ENCODE measurements at regions of chr11 and their contacts with region 1.

Region 1: DNA sequence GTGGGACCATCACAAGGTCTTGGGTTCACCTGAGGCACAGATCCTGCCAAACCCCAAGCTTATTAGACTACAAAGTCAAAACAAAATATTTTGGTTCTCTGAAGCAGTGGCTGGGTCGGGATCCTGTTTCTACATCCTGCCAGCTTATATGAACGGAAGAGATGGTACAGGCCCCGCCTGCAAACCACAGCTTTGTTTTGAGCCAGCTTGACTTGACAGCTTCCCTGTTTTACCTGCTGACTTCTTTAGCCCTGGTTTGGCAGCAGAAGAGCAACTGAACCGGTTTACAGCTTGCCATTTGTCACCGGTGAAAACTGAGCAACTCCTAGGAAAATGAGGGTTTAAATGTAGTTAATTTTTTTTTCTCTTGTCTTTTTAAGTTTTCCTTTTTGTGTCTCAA is 11.4 kb downstream of the PACS1 start:
- DNase-seq: peak; percentile 86
- ATAC-seq: peak; percentile 89
- H3K4me3 Mint-ChIP-seq: peak overlapping the region; percentile 62
- H3K27ac Mint-ChIP-seq: peak overlapping the region; percentile 98
- H3K4me1 Mint-ChIP-seq: peaks cover 89% of the 10 kb centered on the region
- H3K27me3 Mint-ChIP-seq: no peaks in the 10 kb centered on the region

Region 2: DNA sequence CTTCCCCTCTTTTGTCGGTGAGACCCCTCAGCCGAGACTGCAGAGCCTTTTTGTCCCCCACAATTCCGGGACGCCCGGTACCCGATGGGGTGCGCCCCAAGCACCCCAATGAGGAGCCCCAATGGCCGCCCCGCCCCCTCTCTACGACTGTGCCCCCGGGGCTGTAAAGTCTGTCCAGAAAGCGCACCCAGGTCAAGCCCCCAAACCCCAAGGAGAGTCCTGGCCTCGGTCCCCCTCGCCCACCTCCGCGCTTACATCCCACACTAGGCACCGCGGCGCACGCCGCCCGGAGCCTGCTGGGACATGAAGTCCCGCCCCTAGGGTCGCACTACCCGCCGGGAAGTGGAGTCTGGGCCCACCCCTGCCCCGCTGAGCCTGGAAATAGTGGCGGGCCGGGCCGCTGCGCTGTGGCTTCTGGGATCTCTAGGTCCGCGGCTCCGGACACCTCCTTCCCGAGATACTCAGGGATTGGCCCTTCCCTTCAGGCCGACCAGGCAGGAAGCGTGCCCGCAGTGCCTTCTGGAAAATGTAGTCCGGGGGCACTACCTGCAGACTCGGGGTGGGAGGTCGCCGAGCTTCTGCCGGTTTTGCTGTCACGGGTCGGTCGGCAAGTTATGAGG is 1271.1 kb before region 1 on chr11 and contains the start of gene MEN1:
- CTCF ChIA-PET with region 1: no interaction called
- POLR2A ChIA-PET with region 1: no interaction called
- intact Hi-C with region 1: no loop called
- DNase-seq: peak; percentile 92
- ATAC-seq: peak; percentile 95
- H3K4me3 Mint-ChIP-seq: peak within 1 kb of the TSS; percentile 93
- H3K27ac Mint-ChIP-seq: peak within 1 kb of the TSS; percentile 85
- H3K4me1 Mint-ChIP-seq: peaks cover 21% of the 10 kb centered on the region
- H3K27me3 Mint-ChIP-seq: no peaks in the 10 kb centered on the region
- total RNA-seq, gene MEN1: 34.8 to 38.5 TPM

Region 3: DNA sequence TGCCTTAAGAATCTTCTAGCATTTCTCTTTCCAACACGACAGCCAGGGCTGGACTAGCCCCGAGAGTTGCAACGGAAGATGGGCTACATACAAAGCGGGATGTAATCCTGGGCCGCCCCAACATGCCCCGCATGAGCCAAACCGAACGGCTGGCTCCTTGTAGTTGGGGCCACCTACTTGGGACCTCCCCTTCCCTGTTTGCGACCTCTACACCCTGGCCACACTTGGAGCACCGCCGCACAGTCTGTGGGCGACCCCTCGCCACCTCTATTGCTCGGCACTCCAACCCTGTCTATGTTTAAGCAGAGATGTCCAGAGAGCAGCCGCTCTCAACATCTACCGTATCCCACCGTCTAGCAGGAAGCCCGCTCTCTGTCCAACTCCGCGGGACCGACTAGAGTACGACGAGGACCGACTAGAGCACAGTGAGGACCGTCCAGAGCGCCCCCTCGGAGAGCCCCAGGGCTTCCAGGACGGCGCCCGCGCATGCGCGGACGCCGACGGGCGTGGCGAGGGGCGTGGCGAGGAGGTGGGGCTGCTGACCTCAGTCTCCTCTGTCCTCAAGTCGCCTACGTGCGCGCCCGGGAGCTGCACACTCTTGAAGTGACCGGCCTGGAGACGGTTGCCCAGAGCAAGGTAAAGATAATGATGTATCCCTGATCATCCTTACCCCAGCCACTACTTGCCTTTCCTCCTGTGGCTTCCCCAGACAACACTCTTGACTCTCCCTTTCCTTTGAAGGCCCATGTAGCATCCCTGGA is 626.6 kb before region 1 on chr11:
- CTCF ChIA-PET with region 1: no interaction called
- POLR2A ChIA-PET with region 1: no interaction called
- intact Hi-C with region 1: no loop called
- DNase-seq: peak; percentile 91
- ATAC-seq: peak; percentile 94
- H3K4me3 Mint-ChIP-seq: peak overlapping the region; percentile 92
- H3K27ac Mint-ChIP-seq: peak overlapping the region; percentile 85
- H3K4me1 Mint-ChIP-seq: peaks cover 40% of the 10 kb centered on the region
- H3K27me3 Mint-ChIP-seq: no peaks in the 10 kb centered on the region

Region 4: DNA sequence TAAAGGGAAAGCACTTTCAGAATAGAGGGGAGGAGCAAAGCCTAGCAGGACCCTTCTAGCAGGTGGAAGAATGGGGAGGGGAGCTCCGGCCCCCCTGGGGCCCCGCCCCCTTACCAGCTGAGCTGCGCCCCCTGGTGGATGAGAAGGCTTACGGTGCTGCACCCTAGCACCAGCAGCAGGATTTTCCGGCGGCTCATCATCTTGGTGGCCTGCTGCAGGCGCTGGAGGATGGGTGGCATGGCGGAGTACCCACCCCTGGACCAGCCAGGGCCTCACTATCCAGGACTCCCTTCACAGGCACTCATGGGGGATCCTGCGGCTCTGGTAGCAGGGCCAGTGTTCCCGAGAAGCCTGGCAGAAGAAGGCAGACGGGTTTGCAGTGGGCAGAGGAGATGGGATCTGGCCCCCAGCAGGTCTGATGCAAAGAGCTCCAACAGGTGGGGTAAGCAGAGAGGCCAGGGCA is 36.3 kb before region 1 on chr11:
- CTCF ChIA-PET with region 1: interaction called, 11 read pairs
- POLR2A ChIA-PET with region 1: no interaction called
- intact Hi-C with region 1: no loop called
- DNase-seq: peak; percentile 91
- ATAC-seq: peak; percentile 93
- H3K4me3 Mint-ChIP-seq: peak overlapping the region; percentile 21
- H3K27ac Mint-ChIP-seq: no peak overlapping the region
- H3K4me1 Mint-ChIP-seq: peaks cover 22% of the 10 kb centered on the region
- H3K27me3 Mint-ChIP-seq: peaks cover 4% of the 10 kb centered on the region

Region 5: DNA sequence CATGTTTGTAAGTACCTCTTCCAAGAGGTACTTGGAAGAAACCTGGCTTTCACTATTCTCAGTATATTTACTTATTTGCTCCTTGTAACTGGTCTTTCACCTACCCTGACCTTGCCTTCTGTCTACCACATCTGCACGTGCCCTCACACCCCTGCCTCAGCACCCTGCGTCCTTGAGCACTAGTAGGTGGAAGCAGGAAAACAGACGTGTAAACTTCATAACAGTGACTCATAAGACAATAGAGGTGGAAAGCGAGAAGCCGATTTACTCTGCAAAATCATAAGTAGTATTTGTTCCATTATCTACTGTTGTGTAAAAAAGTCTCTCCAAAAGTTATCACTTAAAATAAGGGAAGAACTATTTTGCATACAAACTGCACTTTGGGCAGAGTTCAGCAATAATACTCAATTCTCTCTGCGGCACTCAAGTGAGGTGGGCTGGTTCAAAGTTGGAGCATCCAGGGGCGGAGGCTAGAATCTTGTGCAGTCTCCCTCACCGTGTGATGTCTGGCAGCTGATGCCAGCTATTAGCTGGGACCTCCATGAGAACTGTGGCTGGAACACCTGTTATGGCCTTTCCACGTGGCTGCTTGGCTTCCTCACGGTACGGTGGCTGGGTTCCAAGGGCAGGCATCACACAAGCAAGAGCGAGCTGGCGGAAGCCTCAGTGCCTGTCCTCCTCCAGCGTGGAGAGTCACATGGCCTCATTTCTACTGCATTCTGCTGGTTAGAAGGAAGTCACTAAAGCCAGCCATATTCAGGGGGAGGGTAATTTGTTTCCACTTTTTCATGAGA is 19.0 kb after region 1 on chr11:
- CTCF ChIA-PET with region 1: no interaction called
- POLR2A ChIA-PET with region 1: interaction called, 12 read pairs
- intact Hi-C with region 1: loop called in 1 of 2 experiments (anchors 2 kb)
- DNase-seq: peak; percentile 80
- ATAC-seq: peak; percentile 91
- H3K4me3 Mint-ChIP-seq: peak overlapping the region; percentile 70
- H3K27ac Mint-ChIP-seq: peak overlapping the region; percentile 94
- H3K4me1 Mint-ChIP-seq: peaks cover 66% of the 10 kb centered on the region
- H3K27me3 Mint-ChIP-seq: no peaks in the 10 kb centered on the region

Region 6: GRCh38 chr11:66106786-66107599 is 25.5 kb after region 1 on chr11:
- CTCF ChIA-PET with region 1: interaction called, 4 read pairs
- POLR2A ChIA-PET with region 1: interaction called, 3 read pairs
- intact Hi-C with region 1: loop called in 1 of 2 experiments (anchors 1 kb)
- DNase-seq: peak; percentile 60
- ATAC-seq: peak; percentile 44
- H3K4me3 Mint-ChIP-seq: peak overlapping the region; percentile 0
- H3K27ac Mint-ChIP-seq: peak overlapping the region; percentile 58
- H3K4me1 Mint-ChIP-seq: peaks cover 90% of the 10 kb centered on the region
- H3K27me3 Mint-ChIP-seq: no peaks in the 10 kb centered on the region

Region 7: DNA sequence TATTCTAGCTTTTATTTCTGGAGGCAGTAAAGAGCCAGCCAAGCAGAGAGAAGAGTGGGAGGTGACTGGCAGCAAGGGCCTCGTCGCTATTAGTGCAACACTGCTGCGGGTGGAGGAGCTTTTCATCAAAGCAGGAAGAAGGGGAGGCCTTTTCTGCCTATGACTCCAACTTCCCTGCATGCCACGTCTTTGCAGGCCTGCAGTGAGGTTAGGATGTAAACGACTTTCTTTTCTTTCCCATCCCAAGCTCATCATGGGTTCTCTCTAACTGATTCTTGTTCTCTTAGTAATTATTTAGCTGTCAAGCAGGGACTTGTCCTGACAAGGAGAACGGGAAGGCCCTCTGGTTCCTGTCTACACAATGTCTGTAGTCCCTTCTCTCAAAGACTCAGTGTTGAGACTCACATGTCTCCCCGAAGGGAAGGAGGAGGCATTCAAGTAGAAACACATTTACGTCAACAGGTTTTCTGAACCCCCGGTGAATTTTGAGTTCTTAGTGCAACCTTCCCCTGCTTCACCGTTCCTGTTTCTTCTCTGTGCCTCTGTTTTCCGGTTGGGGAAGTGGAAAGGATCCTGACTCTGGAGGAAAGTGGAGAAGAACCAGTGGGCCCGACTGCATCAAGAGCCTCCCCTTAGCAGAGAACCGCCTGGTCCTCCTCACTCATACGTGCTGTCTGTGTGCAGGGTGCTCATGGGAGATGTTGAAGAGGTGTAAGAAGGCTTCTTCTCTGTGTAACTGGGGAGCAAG is 45.5 kb after region 1 on chr11:
- CTCF ChIA-PET with region 1: interaction called, 3 read pairs
- POLR2A ChIA-PET with region 1: interaction called, 4 read pairs
- intact Hi-C with region 1: loop called (anchors 1 kb)
- DNase-seq: peak; percentile 85
- ATAC-seq: peak; percentile 87
- H3K4me3 Mint-ChIP-seq: peak overlapping the region; percentile 71
- H3K27ac Mint-ChIP-seq: peak overlapping the region; percentile 99
- H3K4me1 Mint-ChIP-seq: peaks cover 77% of the 10 kb centered on the region
- H3K27me3 Mint-ChIP-seq: no peaks in the 10 kb centered on the region

Region 8: DNA sequence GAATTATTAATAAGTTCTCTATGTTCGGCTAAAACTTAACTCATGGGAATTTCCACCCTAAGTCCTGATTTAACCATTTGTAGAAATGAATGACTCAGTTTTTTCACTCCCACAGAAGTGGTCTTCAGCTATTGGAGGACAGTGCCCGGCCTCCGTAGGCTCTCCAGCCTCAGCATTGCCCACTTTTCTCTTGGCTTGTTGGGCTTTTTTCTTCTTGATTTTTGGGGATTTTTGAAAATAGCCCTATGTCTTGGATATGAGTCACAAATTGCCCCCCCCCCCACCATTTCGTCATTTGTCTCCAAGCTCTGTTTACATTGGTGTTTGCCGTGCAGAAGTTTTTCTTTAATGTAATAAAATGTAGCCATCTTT is 55.2 kb after region 1 on chr11:
- CTCF ChIA-PET with region 1: interaction called, 14 read pairs
- POLR2A ChIA-PET with region 1: interaction called, 11 read pairs
- intact Hi-C with region 1: no loop called
- DNase-seq: peak; percentile 52
- ATAC-seq: no peak
- H3K4me3 Mint-ChIP-seq: no peak overlapping the region
- H3K27ac Mint-ChIP-seq: peak overlapping the region; percentile 55
- H3K4me1 Mint-ChIP-seq: peaks cover 59% of the 10 kb centered on the region
- H3K27me3 Mint-ChIP-seq: no peaks in the 10 kb centered on the region